ENCODE measurements at regions of chr7 and their contacts with region 1.

Region 1: GRCh38 chr7:26743205-26743604 is 121.2 kb downstream of the SKAP2 start:
- DNase-seq: no peak
- H3K4me3 ChIP-seq: no peak overlapping the region
- H3K27ac ChIP-seq: no peak overlapping the region
- H3K4me1 ChIP-seq: no peaks in the 10 kb centered on the region
- H3K27me3 ChIP-seq: no peaks in the 10 kb centered on the region
- CTCF ChIP-seq: no peak
- POLR2A ChIP-seq: no peak

Region 2: DNA sequence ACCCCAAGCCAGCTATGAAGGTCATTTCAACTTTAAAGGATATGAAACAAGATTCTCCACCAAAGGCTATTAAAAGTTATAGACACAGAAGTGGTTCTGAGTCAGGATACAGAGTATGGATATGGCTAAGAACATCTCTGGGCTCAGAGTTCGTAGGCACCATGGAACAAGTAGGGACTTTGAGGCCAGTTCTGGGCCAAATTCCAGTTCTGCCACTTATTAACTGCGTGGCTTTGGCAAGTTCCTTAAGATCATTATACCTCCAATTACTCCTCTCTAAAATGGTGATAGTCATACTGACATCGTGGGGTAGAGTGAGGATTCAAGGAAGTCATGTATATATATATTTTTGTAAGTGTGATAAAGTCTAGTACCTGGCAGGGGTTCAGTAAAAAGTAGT is 697.1 kb before region 1 on chr7:
- intact Hi-C with region 1: loop called (anchors 5 kb)
- DNase-seq: no peak
- H3K4me3 ChIP-seq: no peak overlapping the region
- H3K27ac ChIP-seq: no peak overlapping the region
- H3K4me1 ChIP-seq: no peaks in the 10 kb centered on the region
- H3K27me3 ChIP-seq: no peaks in the 10 kb centered on the region
- CTCF ChIP-seq: no peak
- POLR2A ChIP-seq: no peak

Region 3: DNA sequence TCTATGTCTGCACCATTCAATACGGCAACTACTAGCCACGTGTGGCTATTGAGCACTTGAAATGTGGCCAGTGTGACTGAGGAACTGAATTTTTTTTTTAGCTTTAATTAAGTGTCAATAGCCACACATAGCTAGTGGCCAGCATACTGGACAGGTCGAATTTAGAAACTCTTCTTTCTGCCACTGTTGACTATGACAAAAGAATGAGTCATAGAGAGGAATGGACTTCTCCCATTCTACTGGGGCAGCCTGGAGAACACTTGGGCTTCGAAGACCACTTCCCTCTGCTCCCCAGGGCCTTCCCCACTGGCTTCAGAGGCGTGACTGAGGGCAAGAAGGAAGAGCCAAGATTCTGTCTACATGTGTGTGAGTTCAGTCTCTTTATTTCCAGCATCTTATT is 314.0 kb before region 1 on chr7:
- intact Hi-C with region 1: no loop called
- DNase-seq: no peak
- H3K4me3 ChIP-seq: no peak overlapping the region
- H3K27ac ChIP-seq: no peak overlapping the region
- H3K4me1 ChIP-seq: no peaks in the 10 kb centered on the region
- H3K27me3 ChIP-seq: no peaks in the 10 kb centered on the region
- CTCF ChIP-seq: no peak
- POLR2A ChIP-seq: no peak

Measured in vagina (tissue), 2 donors.